H1 (cell line): ENCODE measurements at regions of chr7 and their contacts with region 1.

Region 1: DNA sequence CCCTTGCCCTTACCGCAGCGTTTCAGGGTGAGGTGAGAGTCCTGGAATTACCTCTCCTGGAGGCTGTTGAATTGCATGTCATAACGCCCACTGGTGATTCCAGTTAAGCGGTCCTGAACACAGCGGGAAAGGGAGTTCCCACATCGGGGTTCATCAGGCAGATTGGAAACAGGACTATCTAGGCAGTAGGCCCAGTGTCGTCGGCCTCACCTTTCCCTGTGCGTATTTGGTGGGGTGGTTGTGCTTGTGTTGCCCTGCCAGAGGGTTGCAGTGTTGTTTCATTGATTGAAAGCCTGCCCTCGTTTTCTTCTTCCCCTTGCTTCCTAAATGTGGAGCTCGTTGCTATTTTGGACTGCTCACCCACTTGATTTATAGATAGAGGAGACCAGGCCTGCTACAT is 10.6 kb upstream of the SUN1 start:
- DNase-seq: no peak
- H3K4me3 ChIP-seq: no peak overlapping the region
- H3K27ac ChIP-seq: no peak overlapping the region
- H3K4me1 ChIP-seq: peaks cover 3 to 14% (median 8%) of the 10 kb centered on the region in 4 experiments; a peak in 6 of 7 replicates
- H3K27me3 ChIP-seq: no peaks in the 10 kb centered on the region
- CTCF ChIP-seq: peak in 2 of 3 experiments; percentile 5 to 15; a peak in 1 of 4 replicates
- EP300 ChIP-seq: no peak
- POLR2A ChIP-seq: no peak
- RAD21 ChIP-seq: peak; percentile 32 to 38; a peak in 3 of 4 replicates

Region 2: GRCh38 chr7:836411-837400 is 15.0 kb after region 1 on chr7:
- CTCF ChIA-PET with region 1: interaction called, 16 read pairs
- POLR2A ChIA-PET with region 1: interaction called, 8 read pairs
- DNase-seq: no peak
- H3K4me3 ChIP-seq: no peak overlapping the region
- H3K27ac ChIP-seq: peak overlapping the region; percentile 12; the same call in 1 of the 2 replicates
- H3K4me1 ChIP-seq: peaks cover 0 to 10% (median 3%) of the 10 kb centered on the region in 4 experiments; a peak in 5 of 7 replicates
- H3K27me3 ChIP-seq: no peaks in the 10 kb centered on the region
- CTCF ChIP-seq: peak; percentile 51 to 64 (median 53)
- EP300 ChIP-seq: no peak
- POLR2A ChIP-seq: no peak
- RAD21 ChIP-seq: peak; percentile 7 to 30; a peak in 2 of 4 replicates